Activated T-helper 2 cell treated with anti-CD3 and anti-CD28 coated beads, Interferon-gamma antibody, Interleukin-2, Interleukin-4, amounts not matched to agents 10 μg/mL and 5 μg/mL and 100 μg/mL, durations not matched to agents 14 hours and 24 hours and 36 hours (primary cell): ENCODE measurements at regions of chr5 and their contacts with region 1.

Region 1: GRCh38 chr5:178146020-178146820 is 7.5 kb downstream of the NHP2 start:
- DNase-seq: peak; percentile 55
- H3K4me3 Mint-ChIP-seq: no peak overlapping the region
- H3K27ac Mint-ChIP-seq: no peak overlapping the region
- H3K4me1 Mint-ChIP-seq: peaks cover 24% of the 10 kb centered on the region
- H3K27me3 Mint-ChIP-seq: no peaks in the 10 kb centered on the region

Region 2: DNA sequence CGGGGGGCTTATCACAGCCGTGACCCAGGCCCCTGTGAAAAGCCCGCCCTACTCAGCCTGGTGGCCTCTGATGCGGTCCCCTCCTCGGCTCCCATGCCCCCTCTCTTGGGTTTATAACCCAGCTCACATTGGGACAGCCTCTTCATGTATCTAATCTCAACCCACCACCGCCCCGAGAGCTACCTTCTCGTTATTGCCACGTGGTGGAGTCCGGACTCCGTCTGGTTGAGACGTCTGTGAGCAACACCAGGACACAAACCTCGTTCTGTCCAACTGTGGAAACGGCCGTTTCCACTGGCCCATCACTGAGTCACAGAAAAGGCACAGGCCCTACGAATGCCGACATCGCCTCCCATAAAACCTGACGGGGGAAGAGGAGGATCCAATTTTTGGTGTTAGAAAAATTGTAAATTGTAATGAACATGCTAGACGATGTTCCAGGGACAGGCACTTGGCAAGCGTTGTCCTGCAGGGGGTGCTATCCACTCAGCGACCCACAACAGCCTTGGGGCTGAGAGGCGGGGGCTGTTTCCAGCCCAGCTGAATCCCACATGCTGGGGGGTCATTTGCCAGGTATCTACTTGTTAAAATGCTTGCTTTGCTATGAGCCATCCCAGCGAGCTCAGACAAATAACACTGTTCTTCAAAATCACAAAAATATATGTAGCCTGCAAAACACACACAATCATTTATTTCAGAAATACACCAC is 70.2 kb before region 1 on chr5:
- intact Hi-C with region 1: loop called (anchors 1 kb)
- DNase-seq: peak; percentile 64
- H3K4me3 Mint-ChIP-seq: peak overlapping the region; percentile 67
- H3K27ac Mint-ChIP-seq: no peak overlapping the region
- H3K4me1 Mint-ChIP-seq: peaks cover 8% of the 10 kb centered on the region
- H3K27me3 Mint-ChIP-seq: peaks cover 2% of the 10 kb centered on the region

Region 3: DNA sequence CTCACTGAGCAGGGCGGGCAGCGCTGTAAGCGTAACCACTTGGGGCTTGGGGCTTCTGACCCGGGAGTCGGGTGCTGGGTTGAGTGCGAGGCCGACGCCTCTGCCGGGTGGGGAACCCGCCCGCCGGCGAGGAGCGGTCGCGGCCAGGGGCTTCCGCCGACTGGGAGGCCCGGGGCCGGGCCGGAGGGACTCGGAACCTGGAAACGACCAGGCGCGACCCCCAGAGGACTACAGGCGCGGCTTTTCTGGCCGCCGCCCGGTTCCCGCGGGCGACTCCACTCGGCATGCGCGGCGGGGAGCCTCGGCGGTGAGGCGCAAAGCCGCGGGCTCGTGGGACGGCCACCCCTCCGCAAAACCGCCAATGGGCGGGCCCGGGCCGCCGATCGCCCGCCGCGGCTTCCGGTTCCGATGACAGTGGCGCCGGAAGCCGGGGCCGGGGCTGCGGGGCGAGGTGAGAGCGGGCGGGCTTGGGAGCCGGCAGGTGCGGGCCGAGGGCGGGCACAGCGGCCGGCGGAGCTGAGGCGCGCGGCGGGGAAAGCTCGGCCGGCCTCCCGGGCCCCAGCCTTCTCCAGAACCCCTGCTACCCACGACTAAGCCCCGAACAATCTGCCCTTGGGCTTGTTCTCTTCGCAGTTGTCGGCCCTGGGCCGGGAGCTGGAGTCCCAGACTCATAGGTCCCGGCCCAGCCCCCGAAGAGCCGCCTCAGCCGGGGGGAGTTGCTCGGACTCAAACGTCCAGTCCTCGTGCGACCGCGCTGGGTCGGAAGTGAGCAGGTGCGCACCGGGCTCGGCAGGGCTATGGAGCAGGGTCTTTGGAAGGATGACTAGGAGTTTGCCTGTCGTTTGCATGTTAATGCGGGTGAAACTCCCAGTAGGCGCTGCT is 15.4 kb before region 1 on chr5 and contains the start of gene RMND5B:
- intact Hi-C with region 1: loop called (anchors 2 kb)
- DNase-seq: peak; percentile 81
- H3K4me3 Mint-ChIP-seq: peak within 1 kb of the TSS; percentile 86
- H3K27ac Mint-ChIP-seq: peak within 1 kb of the TSS; percentile 70
- H3K4me1 Mint-ChIP-seq: peaks cover 8% of the 10 kb centered on the region
- H3K27me3 Mint-ChIP-seq: no peaks in the 10 kb centered on the region
- total RNA-seq, gene RMND5B: 29.3 and 31.6 TPM in 2 replicates

Region 4: GRCh38 chr5:178163772-178164735 is 17.8 kb after region 1 on chr5:
- intact Hi-C with region 1: loop called (anchors 2 kb)
- DNase-seq: peak; percentile 83
- H3K4me3 Mint-ChIP-seq: peak overlapping the region; percentile 16
- H3K27ac Mint-ChIP-seq: no peak overlapping the region
- H3K4me1 Mint-ChIP-seq: peaks cover 8% of the 10 kb centered on the region
- H3K27me3 Mint-ChIP-seq: peaks cover 29% of the 10 kb centered on the region